Cardiac septum (tissue), 1 donor: ENCODE measurements at regions of chr10 and their contacts with region 1.

Region 1: DNA sequence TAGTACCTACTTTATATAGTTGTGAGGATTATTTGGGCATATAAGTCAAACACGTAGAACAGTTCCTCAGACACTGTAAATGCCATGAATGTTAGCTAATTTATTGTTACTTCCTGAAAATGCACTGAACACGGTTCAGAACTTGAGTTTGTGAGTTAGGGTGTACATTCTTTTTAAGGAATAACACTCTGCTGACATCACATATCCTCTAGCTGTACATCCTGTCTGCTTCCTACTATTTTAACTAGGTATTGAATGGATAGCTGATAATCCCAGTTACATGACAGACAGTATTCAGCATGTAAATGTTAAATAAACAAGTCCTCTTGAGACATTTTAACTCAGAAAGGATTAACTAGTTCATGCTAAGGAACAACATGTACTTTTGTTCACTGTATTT is 16.0 kb downstream of the SAMD8 start:
- DNase-seq: no peak

Region 2: DNA sequence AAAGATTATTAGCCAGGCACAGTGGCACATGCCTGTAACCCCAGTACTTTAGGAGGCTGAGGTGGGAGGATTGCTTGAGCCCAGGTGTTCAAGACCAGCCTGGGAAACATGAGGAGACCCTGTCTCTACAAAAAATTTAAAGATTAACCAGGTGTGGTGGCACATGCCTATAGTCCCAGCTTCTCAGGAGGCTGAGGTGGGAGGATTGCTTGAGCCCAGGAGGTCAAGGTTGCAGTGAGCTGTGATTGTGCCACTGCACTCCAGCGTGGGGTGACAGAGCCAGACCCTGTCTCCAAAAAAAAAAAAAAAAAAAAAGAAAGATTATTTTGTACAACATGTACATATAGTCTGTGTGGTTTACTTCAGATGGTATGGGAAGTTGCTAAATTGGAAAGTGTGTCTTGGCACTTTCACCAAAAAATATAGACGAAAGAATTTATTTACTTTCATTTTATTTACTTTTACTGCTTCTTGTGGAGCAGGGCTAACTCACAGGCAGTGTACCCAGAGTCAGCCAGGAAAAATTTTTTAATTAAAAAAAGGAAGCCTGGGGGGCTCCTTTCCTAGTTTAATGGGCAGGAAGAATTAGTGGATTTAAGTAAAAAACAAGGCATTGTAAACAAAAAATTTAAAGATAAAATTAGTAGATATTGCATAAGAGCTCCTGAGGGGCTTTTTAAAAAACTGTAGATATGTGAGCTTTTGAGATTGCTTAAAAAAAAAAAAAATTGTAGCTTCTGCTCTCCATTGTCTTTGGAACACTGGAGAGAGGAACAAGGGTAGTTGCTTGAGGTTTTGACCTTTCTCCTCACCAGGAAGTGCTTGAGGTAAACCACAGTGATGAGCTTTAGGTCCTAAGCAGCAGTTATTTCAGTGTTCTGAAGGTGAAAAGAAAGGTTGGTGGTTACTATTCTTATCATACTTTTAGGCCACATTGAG is 38.5 kb after region 1 on chr10:
- intact Hi-C with region 1: loop called (anchors 5 kb)
- DNase-seq: no peak